ENCODE measurements at regions of chr7 and their contacts with region 1.

Region 1: DNA sequence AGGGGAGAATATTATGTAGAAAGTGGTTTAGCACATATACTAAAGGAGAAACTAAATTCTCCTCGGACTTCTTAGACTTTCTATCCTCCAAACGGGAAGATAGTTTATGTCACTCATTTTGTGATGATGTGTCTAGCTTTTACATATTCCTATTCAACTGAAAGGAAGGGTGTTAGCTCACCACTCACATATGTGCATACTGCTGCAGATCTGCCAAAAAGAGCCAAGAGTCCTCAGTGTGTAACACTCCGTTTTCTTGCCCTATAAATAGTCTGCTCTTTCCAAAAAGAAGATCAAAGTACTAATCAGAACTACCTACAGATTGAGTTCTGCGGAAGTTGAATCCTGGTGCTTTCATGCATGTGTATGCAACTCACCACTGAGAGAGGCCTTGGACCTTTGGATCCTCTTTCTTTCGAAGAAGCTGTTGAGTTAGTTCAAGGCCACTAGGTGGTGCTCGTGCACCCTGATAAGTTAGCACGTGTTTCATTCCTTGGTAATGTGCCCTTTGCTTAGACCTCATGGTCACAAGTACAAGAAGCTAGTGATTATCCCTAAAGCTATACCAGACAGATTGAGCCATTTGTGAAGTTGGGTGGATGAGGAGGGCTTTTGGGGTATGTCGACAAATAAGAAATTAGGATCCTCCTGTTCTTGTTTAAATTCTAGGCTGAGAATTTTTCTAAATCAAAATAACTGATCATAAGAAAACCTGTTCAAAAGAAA is 14.1 kb downstream of the YAE1 start:
- DNase-seq: peak; percentile 60 to 92 (median 70)
- ATAC-seq: peak; percentile 96
- H3K4me3 ChIP-seq: no peak overlapping the region
- H3K4me3 Mint-ChIP-seq: no peak overlapping the region
- H3K27ac ChIP-seq: no peak overlapping the region
- H3K27ac Mint-ChIP-seq: no peak overlapping the region
- H3K4me1 ChIP-seq: no peaks in the 10 kb centered on the region
- H3K4me1 Mint-ChIP-seq: peaks cover 9% of the 10 kb centered on the region
- H3K27me3 ChIP-seq: no peaks in the 10 kb centered on the region
- H3K27me3 Mint-ChIP-seq: no peaks in the 10 kb centered on the region
- CTCF ChIP-seq: peak; percentile 75

Region 2: GRCh38 chr7:39746103-39746819 is 165.9 kb after region 1 on chr7:
- CTCF ChIA-PET with region 1: interaction called, 163 read pairs
- POLR2A ChIA-PET with region 1: interaction called, 8 read pairs
- intact Hi-C with region 1: loop called (anchors 1 kb)
- DNase-seq: peak; percentile 23 to 79 (median 57)
- ATAC-seq: peak; percentile 58
- H3K4me3 ChIP-seq: no peak overlapping the region
- H3K4me3 Mint-ChIP-seq: no peak overlapping the region
- H3K27ac ChIP-seq: no peak overlapping the region
- H3K27ac Mint-ChIP-seq: no peak overlapping the region
- H3K4me1 ChIP-seq: no peaks in the 10 kb centered on the region
- H3K4me1 Mint-ChIP-seq: peaks cover 5% of the 10 kb centered on the region
- H3K27me3 ChIP-seq: no peaks in the 10 kb centered on the region
- H3K27me3 Mint-ChIP-seq: no peaks in the 10 kb centered on the region
- CTCF ChIP-seq: peak; percentile 78

Region 3: DNA sequence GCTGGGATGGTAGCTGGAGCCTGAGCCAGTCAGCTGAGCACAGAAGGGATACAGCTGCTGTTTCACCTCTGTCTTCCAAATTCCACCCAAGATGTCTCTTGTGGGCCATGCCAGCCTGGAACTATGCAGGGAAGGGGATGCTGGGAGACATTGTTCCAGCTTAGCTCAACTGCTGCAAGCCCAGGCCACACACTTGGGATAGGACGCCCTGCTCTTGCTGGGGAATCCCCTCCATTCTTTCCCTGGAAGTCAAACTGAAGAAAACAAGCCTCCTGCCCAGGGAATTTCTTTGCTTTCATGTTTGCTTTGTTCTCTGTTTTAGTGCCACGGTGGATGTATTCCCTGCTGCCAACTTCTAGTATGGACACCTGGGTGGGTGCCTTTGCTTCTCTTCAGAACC is 314.6 kb after region 1 on chr7:
- CTCF ChIA-PET with region 1: interaction called, 4 read pairs
- POLR2A ChIA-PET with region 1: interaction called, 3 read pairs
- intact Hi-C with region 1: loop called in 1 of 2 experiments (anchors 5 kb)
- DNase-seq: no peak
- ATAC-seq: no peak
- H3K4me3 ChIP-seq: no peak overlapping the region
- H3K4me3 Mint-ChIP-seq: no peak overlapping the region
- H3K27ac ChIP-seq: no peak overlapping the region
- H3K27ac Mint-ChIP-seq: no peak overlapping the region
- H3K4me1 ChIP-seq: peaks cover 3% of the 10 kb centered on the region
- H3K4me1 Mint-ChIP-seq: no peaks in the 10 kb centered on the region
- H3K27me3 ChIP-seq: peaks cover 3 to 8% of the 10 kb centered on the region in 2 experiments
- H3K27me3 Mint-ChIP-seq: peaks cover 11% of the 10 kb centered on the region
- CTCF ChIP-seq: no peak